CD4-positive, alpha-beta T cell (primary cell): ENCODE measurements at regions of chr19 and their contacts with region 1.

Region 1: DNA sequence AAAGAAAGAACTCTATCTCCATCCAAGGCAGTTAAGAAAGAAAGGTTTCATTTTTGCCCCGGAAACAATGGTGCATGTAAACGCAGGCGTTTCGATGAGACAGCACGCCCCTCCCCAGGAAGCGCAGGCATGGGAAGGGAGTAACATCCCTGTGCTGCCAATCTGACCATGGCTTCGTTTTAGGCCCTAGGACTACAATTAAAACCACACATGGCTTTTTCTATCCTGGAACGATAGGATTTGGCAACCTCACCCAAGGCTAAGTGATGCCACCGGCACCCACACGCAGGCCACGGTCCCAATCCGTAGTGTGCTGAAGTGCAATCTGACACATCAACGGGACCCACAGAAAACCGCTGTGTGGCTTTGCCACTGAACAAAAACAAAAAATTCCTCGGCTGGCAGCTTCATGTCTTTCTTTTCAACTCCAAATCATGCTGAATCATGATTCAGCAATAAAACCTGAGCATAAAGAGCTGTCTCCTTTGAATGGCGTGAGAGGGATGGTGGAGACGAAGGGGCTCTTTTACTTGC is 24.2 kb downstream of the RANBP3 start:
- DNase-seq: peak in 9 of 14 experiments; percentile 19 to 67 (median 41)
- ATAC-seq: peak; percentile 12
- H3K4me3 ChIP-seq: peak overlapping the region; percentile 26
- H3K4me3 Mint-ChIP-seq: peak overlapping the region; percentile 50
- H3K27ac ChIP-seq: peak overlapping the region; percentile 37 to 55
- H3K27ac Mint-ChIP-seq: peak overlapping the region; percentile 92
- H3K4me1 ChIP-seq: peaks cover 88% of the 10 kb centered on the region
- H3K4me1 Mint-ChIP-seq: peaks cover 94% of the 10 kb centered on the region
- H3K27me3 ChIP-seq: no peaks in the 10 kb centered on the region
- H3K27me3 Mint-ChIP-seq: no peaks in the 10 kb centered on the region
- CTCF ChIP-seq: no peak

Region 2: GRCh38 chr19:5870986-5871394 is 82.8 kb before region 1 on chr19:
- CTCF ChIA-PET with region 1: no interaction called
- POLR2A ChIA-PET with region 1: no interaction called
- intact Hi-C with region 1: no loop called
- DNase-seq: no peak
- ATAC-seq: no peak
- H3K4me3 ChIP-seq: no peak overlapping the region
- H3K4me3 Mint-ChIP-seq: no peak overlapping the region
- H3K27ac ChIP-seq: no peak overlapping the region
- H3K27ac Mint-ChIP-seq: no peak overlapping the region
- H3K4me1 ChIP-seq: no peaks in the 10 kb centered on the region
- H3K4me1 Mint-ChIP-seq: no peaks in the 10 kb centered on the region
- H3K27me3 ChIP-seq: no peaks in the 10 kb centered on the region
- H3K27me3 Mint-ChIP-seq: peaks cover 5% of the 10 kb centered on the region
- CTCF ChIP-seq: no peak

Region 3: DNA sequence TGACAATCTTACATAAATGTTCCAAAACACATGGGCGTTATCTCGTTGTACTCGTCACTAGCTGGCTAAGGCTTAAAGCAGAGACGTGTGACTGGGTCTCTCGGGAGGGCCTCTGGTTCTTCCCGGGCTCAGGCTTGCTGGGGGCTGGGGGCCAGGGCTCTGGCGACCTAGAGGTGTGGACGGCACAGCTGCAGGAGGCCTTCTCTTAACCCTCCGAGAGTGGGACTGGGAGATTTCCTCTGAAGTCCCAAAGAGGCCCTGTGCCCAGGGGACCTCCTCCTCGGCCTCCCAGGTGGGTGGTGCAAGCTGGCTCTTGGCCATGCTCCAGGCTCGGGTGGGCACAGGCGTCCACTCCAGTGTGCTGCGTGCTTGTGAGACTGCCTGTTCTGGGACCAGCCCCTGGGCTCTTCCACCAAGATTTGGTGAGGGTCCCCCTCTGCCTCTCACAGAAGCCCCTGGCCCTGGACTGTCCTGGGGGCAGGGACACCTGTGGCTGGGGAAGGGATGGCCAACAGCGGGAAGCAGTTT is 37.5 kb before region 1 on chr19:
- CTCF ChIA-PET with region 1: no interaction called
- POLR2A ChIA-PET with region 1: no interaction called
- intact Hi-C with region 1: no loop called
- DNase-seq: no peak
- ATAC-seq: no peak
- H3K4me3 ChIP-seq: no peak overlapping the region
- H3K4me3 Mint-ChIP-seq: no peak overlapping the region
- H3K27ac ChIP-seq: no peak overlapping the region
- H3K27ac Mint-ChIP-seq: no peak overlapping the region
- H3K4me1 ChIP-seq: no peaks in the 10 kb centered on the region
- H3K4me1 Mint-ChIP-seq: no peaks in the 10 kb centered on the region
- H3K27me3 ChIP-seq: no peaks in the 10 kb centered on the region
- H3K27me3 Mint-ChIP-seq: no peaks in the 10 kb centered on the region
- CTCF ChIP-seq: no peak

Region 4: GRCh38 chr19:5967994-5968430 is 14.3 kb after region 1 on chr19:
- CTCF ChIA-PET with region 1: interaction called, 13 read pairs
- POLR2A ChIA-PET with region 1: interaction called, 4 read pairs
- intact Hi-C with region 1: loop called in 1 of 2 experiments (anchors 2 kb)
- DNase-seq: peak; percentile 42 to 83 (median 50)
- ATAC-seq: peak; percentile 78
- H3K4me3 ChIP-seq: no peak overlapping the region
- H3K4me3 Mint-ChIP-seq: peak overlapping the region; percentile 40
- H3K27ac ChIP-seq: peak overlapping the region in 1 of 2 donors; percentile 22
- H3K27ac Mint-ChIP-seq: peak overlapping the region; percentile 98
- H3K4me1 ChIP-seq: peaks cover 81% of the 10 kb centered on the region
- H3K4me1 Mint-ChIP-seq: peaks cover 93% of the 10 kb centered on the region
- H3K27me3 ChIP-seq: no peaks in the 10 kb centered on the region
- H3K27me3 Mint-ChIP-seq: no peaks in the 10 kb centered on the region
- CTCF ChIP-seq: peak; percentile 93